Activated T-helper 1 cell treated with anti-CD3 and anti-CD28 coated beads, Interleukin-12 subunit alpha, Interleukin-12 subunit beta, Interleukin-2, Interleukin-4 antibody, amounts not matched to agents 30 ng/mL and 10 ng/mL and 1 ng/mL, durations not matched to agents 14 hours and 24 hours and 36 hours (primary cell): ENCODE measurements at regions of chr5 and their contacts with region 1.

Region 1: GRCh38 chr5:59007460-59008063 is 424.7 kb downstream of the RAB3C start:
- DNase-seq: no peak
- H3K4me3 Mint-ChIP-seq: no peak overlapping the region
- H3K27ac Mint-ChIP-seq: no peak overlapping the region
- H3K4me1 Mint-ChIP-seq: peaks cover 90% of the 10 kb centered on the region
- H3K27me3 Mint-ChIP-seq: no peaks in the 10 kb centered on the region

Region 2: DNA sequence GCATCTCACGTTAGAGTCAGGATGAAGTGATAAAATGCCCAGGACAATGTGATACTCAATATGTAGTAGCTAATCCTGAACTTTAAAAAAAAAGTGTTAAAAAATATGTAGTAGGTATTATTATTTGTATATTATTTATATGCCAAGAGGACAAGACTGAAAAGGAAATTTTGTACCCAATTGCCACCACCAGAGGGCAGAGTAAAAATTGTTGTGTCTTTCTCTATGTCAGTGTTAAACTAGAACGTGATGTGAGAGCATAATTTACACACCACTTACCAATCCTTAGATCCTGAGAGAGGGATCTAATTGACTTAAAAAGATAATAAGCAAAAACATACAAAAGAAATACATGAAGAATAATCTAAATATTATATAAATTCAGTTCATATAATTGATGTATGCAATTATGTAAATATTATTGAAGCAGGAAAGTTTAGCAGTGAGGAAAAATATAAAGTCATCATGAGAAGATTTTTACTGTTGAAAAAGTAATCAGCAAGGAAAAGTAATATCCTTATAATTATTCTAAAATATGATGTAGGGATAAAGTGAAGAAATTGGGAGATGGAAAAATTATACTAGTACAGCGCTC is 135.8 kb before region 1 on chr5:
- intact Hi-C with region 1: loop called (anchors 1 kb)
- DNase-seq: no peak
- H3K4me3 Mint-ChIP-seq: no peak overlapping the region
- H3K27ac Mint-ChIP-seq: no peak overlapping the region
- H3K4me1 Mint-ChIP-seq: no peaks in the 10 kb centered on the region
- H3K27me3 Mint-ChIP-seq: peaks cover 22% of the 10 kb centered on the region

Region 3: DNA sequence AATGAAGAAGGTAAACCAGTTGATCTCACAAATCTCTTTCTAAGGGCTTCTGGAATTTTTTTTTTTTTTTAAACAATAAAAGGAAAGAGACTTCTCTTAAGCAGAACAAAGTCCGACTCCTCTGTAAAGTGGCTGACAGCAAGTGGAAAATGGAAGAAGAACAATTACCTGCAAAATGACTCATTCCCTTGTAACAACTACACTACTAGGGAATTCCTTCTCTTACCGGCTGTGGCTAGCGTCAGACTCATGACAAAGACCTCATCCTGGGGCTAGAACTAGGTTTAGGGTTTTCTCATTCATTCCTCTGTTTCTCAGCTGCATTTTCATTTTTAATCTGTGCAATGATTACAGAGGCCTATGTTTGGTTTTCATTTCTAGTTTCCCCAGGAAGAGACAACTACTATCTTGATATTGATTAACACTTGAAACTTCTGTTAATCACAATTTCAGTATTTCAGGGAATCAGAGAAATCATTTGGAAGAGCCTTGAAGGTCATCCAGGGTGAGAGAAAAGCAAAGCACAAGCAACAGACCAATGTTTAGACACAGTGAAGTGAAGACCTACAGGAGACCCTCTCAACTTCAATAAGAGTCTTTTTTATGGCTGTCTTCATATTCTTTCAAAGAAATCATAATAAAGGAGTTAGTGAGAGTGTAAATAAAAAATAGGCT is 13.2 kb after region 1 on chr5:
- intact Hi-C with region 1: loop called (anchors 1 kb)
- DNase-seq: no peak
- H3K4me3 Mint-ChIP-seq: peak overlapping the region; percentile 15
- H3K27ac Mint-ChIP-seq: peak overlapping the region; percentile 94
- H3K4me1 Mint-ChIP-seq: peaks cover 75% of the 10 kb centered on the region
- H3K27me3 Mint-ChIP-seq: no peaks in the 10 kb centered on the region

Region 4: DNA sequence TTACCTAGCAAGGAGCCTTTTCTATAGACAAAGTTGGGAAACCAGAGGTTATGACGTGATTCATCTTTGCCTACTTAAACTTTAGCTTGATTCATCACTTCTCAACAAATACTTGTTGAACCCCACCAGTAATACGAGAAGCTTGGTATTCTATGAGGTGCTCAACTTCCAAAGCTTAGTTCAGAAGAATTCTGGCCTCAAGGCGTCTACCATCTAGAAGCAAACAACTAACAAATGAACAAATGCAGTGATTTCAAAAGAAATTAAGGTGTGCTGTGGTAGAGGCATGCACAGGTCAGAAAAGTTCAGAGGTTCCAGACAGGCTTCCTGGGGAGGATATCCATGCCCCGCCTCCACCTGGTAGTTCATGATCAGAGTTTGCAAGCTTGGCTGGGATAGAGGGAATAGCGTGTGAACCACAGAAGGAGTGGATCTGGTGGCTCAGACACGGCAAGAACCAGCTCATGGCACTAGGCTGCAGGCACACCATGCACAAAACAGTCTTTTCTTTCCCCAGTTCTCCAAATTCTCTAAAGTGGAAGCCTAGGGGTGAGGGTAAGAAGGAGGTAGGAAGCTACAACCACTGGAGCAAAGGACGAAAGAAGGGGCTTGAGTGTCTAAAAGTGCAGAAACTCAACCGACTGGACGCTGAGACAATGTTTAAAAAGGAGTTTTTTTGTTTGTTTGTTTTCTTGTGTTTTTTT is 48.3 kb after region 1 on chr5:
- intact Hi-C with region 1: no loop called
- DNase-seq: no peak
- H3K4me3 Mint-ChIP-seq: no peak overlapping the region
- H3K27ac Mint-ChIP-seq: no peak overlapping the region
- H3K4me1 Mint-ChIP-seq: no peaks in the 10 kb centered on the region
- H3K27me3 Mint-ChIP-seq: peaks cover 17% of the 10 kb centered on the region

Region 5: GRCh38 chr5:59099270-59099994 is 91.9 kb after region 1 on chr5:
- intact Hi-C with region 1: no loop called
- DNase-seq: peak; percentile 69
- H3K4me3 Mint-ChIP-seq: peak overlapping the region; percentile 50
- H3K27ac Mint-ChIP-seq: peak overlapping the region; percentile 90
- H3K4me1 Mint-ChIP-seq: peaks cover 82% of the 10 kb centered on the region
- H3K27me3 Mint-ChIP-seq: no peaks in the 10 kb centered on the region

Region 6: GRCh38 chr5:59436364-59437148 is 429.0 kb after region 1 on chr5:
- intact Hi-C with region 1: no loop called
- DNase-seq: no peak
- H3K4me3 Mint-ChIP-seq: no peak overlapping the region
- H3K27ac Mint-ChIP-seq: no peak overlapping the region
- H3K4me1 Mint-ChIP-seq: no peaks in the 10 kb centered on the region
- H3K27me3 Mint-ChIP-seq: no peaks in the 10 kb centered on the region